A549 (cell line): ENCODE measurements at regions of chr7 and their contacts with region 1.

Region 1: GRCh38 chr7:25259587-25260243 is 31.4 kb upstream of the NPVF start:
- DNase-seq: peak; percentile 38 to 76
- ATAC-seq: peak; percentile 84 to 95
- H3K4me3 ChIP-seq: no peak overlapping the region
- H3K27ac ChIP-seq: no peak overlapping the region
- H3K4me1 ChIP-seq: no peaks in the 10 kb centered on the region
- CTCF ChIP-seq: peak; percentile 88
- EP300 ChIP-seq: no peak
- POLR2A ChIP-seq: no peak
- RAD21 ChIP-seq: peak; percentile 86 to 90

Region 2: GRCh38 chr7:25223206-25223605 is 36.5 kb before region 1 on chr7:
- CTCF ChIA-PET with region 1: no interaction called
- POLR2A ChIA-PET with region 1: no interaction called
- DNase-seq: no peak
- ATAC-seq: no peak
- H3K4me3 ChIP-seq: no peak overlapping the region
- H3K27ac ChIP-seq: no peak overlapping the region
- H3K4me1 ChIP-seq: no peaks in the 10 kb centered on the region
- CTCF ChIP-seq: no peak
- EP300 ChIP-seq: no peak
- POLR2A ChIP-seq: no peak
- RAD21 ChIP-seq: no peak

Region 3: GRCh38 chr7:25389489-25390106 is 129.9 kb after region 1 on chr7:
- CTCF ChIA-PET with region 1: interaction called, 84 read pairs
- POLR2A ChIA-PET with region 1: no interaction called
- DNase-seq: peak; percentile 38 to 54
- ATAC-seq: peak; percentile 57 to 77; a peak in 4 of 6 replicates
- H3K4me3 ChIP-seq: no peak overlapping the region
- H3K27ac ChIP-seq: no peak overlapping the region
- H3K4me1 ChIP-seq: no peaks in the 10 kb centered on the region
- CTCF ChIP-seq: peak; percentile 59
- EP300 ChIP-seq: no peak
- POLR2A ChIP-seq: no peak
- RAD21 ChIP-seq: peak; percentile 47 to 62; a peak in 4 of 5 replicates

Region 4: DNA sequence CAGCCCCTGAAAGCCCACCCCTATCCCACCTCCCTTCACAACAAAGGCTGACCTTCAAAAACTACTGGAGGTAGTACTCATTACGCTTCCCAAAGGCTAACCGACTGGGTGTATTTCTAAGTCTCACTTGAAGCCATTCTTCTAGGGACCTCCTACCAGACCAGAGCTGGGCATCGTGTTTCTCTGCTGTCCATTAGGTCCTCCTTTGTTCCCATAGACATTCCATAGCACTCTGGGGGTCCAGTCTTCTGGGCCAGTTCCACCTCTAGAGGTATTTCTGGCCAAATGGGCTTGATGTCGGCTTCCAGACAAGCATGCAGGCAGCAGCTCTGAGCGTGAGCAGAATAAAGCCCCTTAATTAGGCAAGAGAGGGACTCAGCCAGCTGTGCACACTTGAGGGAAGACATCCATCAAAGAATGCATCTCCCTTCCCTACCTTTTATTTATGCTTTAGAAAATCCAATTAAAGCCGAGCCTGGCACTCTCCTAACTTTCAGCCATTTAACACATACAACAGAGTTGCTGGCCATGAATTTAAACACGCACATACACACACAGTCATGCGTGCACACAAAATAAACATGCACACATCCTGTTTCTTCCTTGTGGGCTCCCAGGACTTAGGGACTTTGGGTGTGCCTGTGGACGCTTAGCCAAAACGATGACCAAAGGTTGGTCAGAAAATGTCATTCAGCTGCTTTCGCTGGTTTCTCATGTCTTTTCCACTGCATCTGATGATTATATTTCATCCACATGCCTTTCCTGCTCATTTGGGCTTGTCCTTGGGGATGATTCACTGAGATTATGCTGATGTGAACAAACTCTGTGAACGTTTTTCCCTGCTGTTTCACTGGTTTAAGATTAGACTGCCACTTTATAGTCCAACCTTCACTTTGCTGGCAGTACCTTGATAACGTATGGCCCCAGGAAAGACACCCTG is 530.3 kb after region 1 on chr7:
- CTCF ChIA-PET with region 1: no interaction called
- POLR2A ChIA-PET with region 1: no interaction called
- DNase-seq: no peak
- ATAC-seq: no peak; a peak in 1 of 6 replicates
- H3K4me3 ChIP-seq: no peak overlapping the region
- H3K27ac ChIP-seq: no peak overlapping the region
- H3K4me1 ChIP-seq: no peaks in the 10 kb centered on the region
- CTCF ChIP-seq: no peak
- EP300 ChIP-seq: no peak
- POLR2A ChIP-seq: no peak
- RAD21 ChIP-seq: no peak